Posterior cingulate gyrus (tissue), 11 donors: ENCODE measurements at regions of chr17 and their contacts with region 1.

Region 1: DNA sequence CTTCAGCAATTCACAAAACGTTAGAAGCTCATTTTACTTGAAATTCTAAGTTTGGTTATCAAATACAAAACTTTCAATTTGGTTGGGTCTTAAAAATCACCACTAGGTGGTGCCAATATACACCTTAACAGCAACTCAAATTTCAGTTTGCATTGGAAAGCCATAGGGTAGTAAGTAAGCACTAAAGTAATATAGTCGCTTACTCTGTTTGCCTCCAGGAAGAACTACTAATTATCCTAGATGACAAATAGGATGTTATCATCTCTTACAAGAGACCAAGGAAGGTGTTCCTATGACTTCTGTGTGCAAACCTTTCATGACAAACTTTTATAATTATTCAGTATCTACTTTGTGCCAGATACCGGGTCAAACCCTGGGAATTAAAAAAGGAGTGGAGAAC is 93.3 kb downstream of the MYO1D start:
- DNase-seq: no peak

Region 2: GRCh38 chr17:32713081-32713480 is 70.5 kb before region 1 on chr17:
- intact Hi-C with region 1: no loop called
- DNase-seq: no peak

Region 3: GRCh38 chr17:32828822-32829221 is 45.2 kb after region 1 on chr17:
- intact Hi-C with region 1: no loop called
- DNase-seq: no peak

Region 4: GRCh38 chr17:32877164-32877764 is 93.7 kb after region 1 on chr17:
- intact Hi-C with region 1: loop called (anchors 1 kb)
- DNase-seq: peak; percentile 73 to 98 (median 82)

Region 5: DNA sequence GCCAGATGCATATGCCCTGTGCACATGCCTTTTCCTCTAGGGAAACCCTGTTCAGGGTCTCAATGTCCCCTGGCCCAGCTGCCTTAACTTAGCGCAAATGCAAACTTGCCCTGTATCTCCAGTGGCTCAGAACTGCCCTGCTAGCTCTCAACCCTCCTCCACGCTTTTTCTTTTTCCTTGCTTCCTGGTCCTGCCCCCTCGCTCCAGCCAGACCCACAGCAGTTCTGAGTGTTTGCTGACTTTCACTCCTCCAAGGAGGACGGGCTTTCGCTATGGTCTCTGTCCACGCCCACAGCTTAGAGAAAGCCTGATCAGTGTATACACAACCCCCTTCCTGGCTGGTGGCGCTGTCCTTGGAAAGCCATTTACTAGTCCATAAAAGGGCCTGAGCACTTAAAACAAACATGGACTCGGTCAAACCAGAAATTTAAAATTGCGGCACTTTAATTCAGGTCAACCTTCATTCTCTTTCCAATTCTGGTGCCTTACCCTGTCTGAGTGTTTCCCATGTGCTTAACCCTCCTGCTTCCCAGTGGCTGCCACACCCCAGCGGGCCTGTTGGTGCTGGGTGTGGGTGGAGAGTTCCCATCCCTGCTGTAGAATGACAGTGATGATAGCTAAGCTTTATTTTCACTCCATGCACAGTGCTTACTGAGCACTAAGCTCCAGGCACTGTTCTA is 128.8 kb after region 1 on chr17:
- intact Hi-C with region 1: loop called (anchors 2 kb)
- DNase-seq: no peak

Region 6: DNA sequence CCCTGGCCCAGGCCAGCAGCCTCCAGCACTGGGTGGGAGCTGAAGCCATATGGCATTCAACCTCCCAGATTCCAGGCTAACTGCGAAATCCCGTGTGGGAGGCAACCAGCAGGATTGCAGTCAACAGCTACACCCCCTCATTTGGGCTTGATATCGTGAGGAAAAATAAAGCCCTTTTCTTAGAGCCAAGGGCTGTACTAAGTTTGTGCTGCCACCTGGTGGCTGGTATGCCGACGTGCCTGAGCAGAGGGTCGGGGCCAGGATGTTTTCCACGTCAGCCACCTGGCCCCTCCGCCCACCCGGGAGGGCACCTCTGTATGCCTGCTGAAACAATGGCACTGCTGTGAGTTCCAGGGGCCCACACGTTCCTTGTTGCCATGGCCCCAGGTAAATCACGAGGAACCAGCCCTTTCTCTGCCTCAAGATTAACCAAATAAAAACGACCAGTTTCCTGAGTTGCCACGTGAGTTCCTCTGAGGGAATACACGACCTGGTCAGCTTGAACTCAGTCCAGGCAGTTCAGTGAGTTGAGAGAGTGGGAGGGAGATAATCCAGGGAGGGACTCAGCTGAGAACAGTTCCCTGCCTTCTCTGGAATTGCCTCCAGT is 153.4 kb after region 1 on chr17:
- intact Hi-C with region 1: loop called (anchors 5 kb)
- DNase-seq: peak in 8 of 10 donors; percentile 53 to 94 (median 68)

Region 7: DNA sequence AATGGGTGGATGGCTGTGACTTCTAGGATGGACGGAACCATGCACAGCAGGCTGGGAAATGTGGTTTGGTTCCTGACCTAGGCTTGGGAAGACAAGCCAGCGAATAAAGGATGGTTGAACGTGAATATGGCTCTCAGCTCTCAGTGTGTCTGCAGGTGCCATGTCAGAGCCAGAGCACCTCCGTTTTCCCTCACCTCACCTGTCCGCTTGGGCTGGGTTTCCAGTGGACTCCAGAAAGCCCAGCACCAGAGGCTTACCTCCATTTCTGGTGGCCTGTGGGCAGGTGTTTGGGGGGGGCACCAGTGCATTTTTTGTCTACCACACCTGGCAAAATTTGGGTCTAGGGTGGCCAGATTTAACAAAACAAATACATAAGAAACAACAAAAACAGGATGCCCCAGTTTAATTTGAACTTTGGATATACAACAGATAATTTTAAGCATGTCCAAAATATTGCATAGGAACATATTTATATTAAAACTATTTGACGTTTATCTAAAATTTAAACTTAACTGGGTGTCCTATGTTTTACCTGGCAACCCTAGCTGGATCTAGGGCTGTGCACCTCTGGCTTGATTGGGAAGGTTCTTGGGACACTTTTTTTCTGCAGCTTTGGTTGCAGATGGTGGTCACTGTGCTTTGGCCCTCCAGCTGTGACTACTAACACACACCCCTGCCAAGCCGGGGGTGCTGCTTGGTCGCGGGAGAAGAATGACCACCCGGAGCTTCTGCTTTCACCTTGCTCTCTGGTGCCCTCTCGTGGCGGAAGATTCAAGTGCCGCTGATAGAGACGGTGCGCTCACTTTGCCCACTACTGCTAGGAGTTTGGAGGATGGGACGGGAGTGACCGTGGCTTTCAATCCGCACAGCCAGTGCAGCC is 214.4 kb after region 1 on chr17:
- intact Hi-C with region 1: loop called (anchors 5 kb)
- DNase-seq: peak; percentile 46 to 96 (median 83)

Region 8: GRCh38 chr17:33284022-33284421 is 500.4 kb after region 1 on chr17:
- intact Hi-C with region 1: no loop called
- DNase-seq: no peak